Breast epithelium (tissue), 4 donors: ENCODE measurements at regions of chr4 and their contacts with region 1.

Region 1: GRCh38 chr4:106854569-106855351 is 181.4 kb downstream of the DKK2 start:
- DNase-seq: no peak
- H3K4me3 ChIP-seq: no peak overlapping the region
- H3K27ac ChIP-seq: no peak overlapping the region
- H3K4me1 ChIP-seq: no peaks in the 10 kb centered on the region
- H3K27me3 ChIP-seq: no peaks in the 10 kb centered on the region
- CTCF ChIP-seq: no peak
- POLR2A ChIP-seq: no peak

Region 2: GRCh38 chr4:106898621-106899230 is 44.0 kb after region 1 on chr4:
- intact Hi-C with region 1: no loop called
- DNase-seq: no peak
- H3K4me3 ChIP-seq: no peak overlapping the region
- H3K27ac ChIP-seq: no peak overlapping the region
- H3K4me1 ChIP-seq: no peaks in the 10 kb centered on the region
- H3K27me3 ChIP-seq: no peaks in the 10 kb centered on the region
- CTCF ChIP-seq: peak in 2 of 3 donors; percentile 24 to 33
- POLR2A ChIP-seq: no peak

Region 3: GRCh38 chr4:107183155-107183774 is 328.5 kb after region 1 on chr4:
- intact Hi-C with region 1: no loop called
- DNase-seq: peak in 1 of 2 donors; percentile 19
- H3K4me3 ChIP-seq: no peak overlapping the region
- H3K27ac ChIP-seq: no peak overlapping the region
- H3K4me1 ChIP-seq: no peaks in the 10 kb centered on the region
- H3K27me3 ChIP-seq: no peaks in the 10 kb centered on the region
- CTCF ChIP-seq: peak; percentile 32 to 66 (median 48)
- POLR2A ChIP-seq: no peak

Region 4: GRCh38 chr4:107404591-107405300 is 550.0 kb after region 1 on chr4:
- intact Hi-C with region 1: loop called (anchors 5 kb)
- DNase-seq: no peak
- H3K4me3 ChIP-seq: no peak overlapping the region
- H3K27ac ChIP-seq: no peak overlapping the region
- H3K4me1 ChIP-seq: no peaks in the 10 kb centered on the region
- H3K27me3 ChIP-seq: no peaks in the 10 kb centered on the region
- CTCF ChIP-seq: no peak
- POLR2A ChIP-seq: no peak